WTC11 (cell line): ENCODE measurements at regions of chr1 and their contacts with region 1.

Region 1: GRCh38 chr1:35544978-35545377 is 12.2 kb downstream of the KIAA0319L start:
- DNase-seq: peak; percentile 66
- ATAC-seq: peak; percentile 99
- H3K4me3 Mint-ChIP-seq: no peak overlapping the region
- H3K27ac Mint-ChIP-seq: 0 out of 2 replicates have a peak overlapping the region, but pooled peaks have one; percentile 2
- H3K4me1 Mint-ChIP-seq: peaks cover 16% of the 10 kb centered on the region
- H3K27me3 Mint-ChIP-seq: no peaks in the 10 kb centered on the region
- CTCF ChIP-seq: no peak; the same call in 1 of the 2 replicates

Region 2: DNA sequence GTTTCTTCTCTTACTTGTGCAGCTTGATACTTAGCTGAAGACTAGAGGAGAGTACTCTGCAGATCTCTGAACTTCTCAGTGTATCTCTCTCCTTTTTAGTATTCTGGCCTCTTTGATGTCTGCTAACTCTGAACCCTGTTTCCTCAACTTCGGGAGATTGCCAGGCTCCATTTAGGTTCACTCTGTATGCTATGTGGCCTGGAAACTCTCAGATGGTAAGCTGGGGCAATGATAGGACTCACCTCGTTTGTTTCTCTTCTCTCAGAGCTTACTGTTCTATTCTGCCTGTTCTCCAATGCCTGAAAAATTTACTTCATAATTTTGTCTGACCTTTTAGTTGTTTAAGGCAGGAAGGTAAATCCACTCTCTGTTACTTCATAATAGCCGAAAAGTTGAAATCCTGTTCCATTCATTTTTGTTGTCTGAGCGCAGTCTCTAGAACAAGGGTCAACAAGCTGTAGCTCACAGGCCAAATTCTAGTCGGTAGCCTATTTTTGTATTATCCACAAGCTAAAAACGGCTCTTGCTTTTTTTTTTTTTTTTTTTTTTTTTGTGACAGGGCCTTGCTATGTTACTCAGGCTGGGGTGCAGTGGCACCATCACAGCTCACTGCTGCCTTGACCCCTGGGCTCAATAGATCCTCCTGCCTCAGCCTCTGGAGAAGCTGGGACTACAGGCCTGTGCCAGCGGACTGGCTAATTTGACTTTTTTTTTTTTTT is 243.1 kb before region 1 on chr1:
- CTCF ChIA-PET with region 1: no interaction called
- POLR2A ChIA-PET with region 1: no interaction called
- DNase-seq: no peak
- ATAC-seq: no peak
- H3K4me3 Mint-ChIP-seq: no peak overlapping the region
- H3K27ac Mint-ChIP-seq: peak overlapping the region; percentile 67; the same call in 1 of the 2 replicates
- H3K4me1 Mint-ChIP-seq: peaks cover 15% of the 10 kb centered on the region
- H3K27me3 Mint-ChIP-seq: no peaks in the 10 kb centered on the region
- CTCF ChIP-seq: no peak

Region 3: DNA sequence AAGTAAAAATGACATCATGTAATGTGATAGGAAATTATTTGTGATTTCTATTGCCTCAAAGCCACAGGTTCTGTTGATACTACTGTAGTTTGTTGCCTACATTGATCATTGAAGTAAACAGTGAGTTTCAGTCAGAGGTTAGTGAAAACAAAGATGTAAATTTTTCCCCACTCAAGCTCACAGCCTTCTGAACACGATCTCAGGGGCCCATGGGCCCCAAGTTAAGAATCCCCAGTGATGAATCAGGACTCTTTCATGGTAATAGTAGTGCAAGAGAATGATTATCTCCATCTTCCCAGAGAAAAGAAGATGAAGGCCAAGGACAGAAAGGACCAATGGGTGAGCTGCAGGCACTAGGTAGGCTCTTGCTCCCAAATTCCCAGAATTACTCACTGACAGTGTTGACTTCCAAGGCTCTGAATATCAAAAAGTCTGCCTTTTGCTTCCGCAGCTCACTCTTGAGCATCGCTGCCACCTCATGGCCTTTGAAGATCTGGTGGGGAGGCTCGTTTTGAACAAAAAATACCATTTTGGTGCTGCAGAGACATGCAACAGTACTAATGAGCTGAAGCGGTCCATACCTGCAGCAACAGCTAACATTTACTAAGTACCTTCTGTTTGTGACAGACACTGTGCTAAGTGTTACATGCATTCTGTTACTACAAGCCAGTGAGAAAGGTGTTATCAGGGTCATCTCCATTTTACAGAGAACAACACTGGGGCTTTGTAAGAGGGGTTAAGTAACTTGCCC is 101.0 kb before region 1 on chr1:
- CTCF ChIA-PET with region 1: interaction called, 10 read pairs
- POLR2A ChIA-PET with region 1: interaction called, 3 read pairs
- DNase-seq: no peak
- ATAC-seq: peak; percentile 60
- H3K4me3 Mint-ChIP-seq: no peak overlapping the region
- H3K27ac Mint-ChIP-seq: peak overlapping the region; percentile 51; the same call in 1 of the 2 replicates
- H3K4me1 Mint-ChIP-seq: no peaks in the 10 kb centered on the region
- H3K27me3 Mint-ChIP-seq: no peaks in the 10 kb centered on the region
- CTCF ChIP-seq: no peak

Region 4: DNA sequence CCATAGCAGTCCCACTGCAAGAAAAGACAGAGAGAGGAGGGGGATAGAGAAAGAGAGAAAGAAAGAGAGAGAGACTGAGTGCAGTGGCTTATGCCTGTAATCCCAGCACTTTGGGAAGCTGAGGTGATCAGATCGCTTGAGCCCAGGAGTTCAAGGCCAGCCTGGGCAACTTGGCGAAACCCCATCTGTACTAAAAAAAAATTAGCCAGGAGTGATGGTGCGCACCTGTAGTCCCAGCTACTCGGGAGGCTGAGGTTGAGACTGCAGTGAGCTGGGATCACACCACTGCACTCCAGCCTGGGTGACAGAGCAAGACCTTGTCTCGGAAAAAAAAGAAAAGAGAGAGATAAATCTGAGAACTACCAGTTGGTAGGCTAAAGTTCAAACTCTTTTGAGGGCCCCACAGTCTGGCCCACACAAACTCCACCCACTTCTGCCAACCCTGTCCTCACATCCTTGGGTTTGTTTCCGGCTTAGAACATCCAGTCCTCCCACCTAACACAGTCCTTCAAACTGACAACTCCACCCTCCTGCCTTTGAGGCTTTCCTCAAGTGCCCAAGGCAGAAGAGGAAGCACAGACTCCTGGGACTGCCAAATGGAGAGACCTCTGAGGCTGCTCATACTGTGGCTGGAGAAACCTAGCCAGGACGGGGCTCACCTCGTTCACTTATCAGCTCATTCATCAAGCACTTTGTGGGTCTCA is 48.2 kb after region 1 on chr1:
- CTCF ChIA-PET with region 1: no interaction called
- POLR2A ChIA-PET with region 1: no interaction called
- DNase-seq: no peak
- ATAC-seq: no peak
- H3K4me3 Mint-ChIP-seq: no peak overlapping the region
- H3K27ac Mint-ChIP-seq: no peak overlapping the region
- H3K4me1 Mint-ChIP-seq: peaks cover 4% of the 10 kb centered on the region; the same call in 1 of the 2 replicates
- H3K27me3 Mint-ChIP-seq: no peaks in the 10 kb centered on the region
- CTCF ChIP-seq: no peak